Activated naive CD4-positive, alpha-beta T cell treated with anti-CD3 and anti-CD28 coated beads for 36 hours (primary cell): ENCODE measurements at regions of chr1 and their contacts with region 1.

Region 1: GRCh38 chr1:145978854-145979759 is 14.6 kb downstream of the POLR3GL start:
- DNase-seq: peak; percentile 93
- H3K4me3 Mint-ChIP-seq: no peak overlapping the region
- H3K27ac Mint-ChIP-seq: no peak overlapping the region
- H3K4me1 Mint-ChIP-seq: peaks cover 5% of the 10 kb centered on the region
- H3K27me3 Mint-ChIP-seq: no peaks in the 10 kb centered on the region

Region 2: GRCh38 chr1:145858894-145859490 is 120.1 kb before region 1 on chr1 and contains the start of gene PIAS3:
- CTCF ChIA-PET with region 1: interaction called, 12 read pairs
- intact Hi-C with region 1: no loop called
- DNase-seq: peak; percentile 84
- H3K4me3 Mint-ChIP-seq: peak within 1 kb of the TSS; percentile 87
- H3K27ac Mint-ChIP-seq: peak within 1 kb of the TSS; percentile 83
- H3K4me1 Mint-ChIP-seq: peaks cover 9% of the 10 kb centered on the region
- H3K27me3 Mint-ChIP-seq: no peaks in the 10 kb centered on the region
- total RNA-seq, gene PIAS3: 19.1 to 19.6 TPM

Region 3: GRCh38 chr1:145963995-145964901 is 14.9 kb before region 1 on chr1 and contains the starts of genes ANKRD34A and POLR3GL:
- CTCF ChIA-PET with region 1: interaction called, 44 read pairs
- intact Hi-C with region 1: loop called (anchors 1 kb)
- DNase-seq: peak; percentile 98
- H3K4me3 Mint-ChIP-seq: peak within 1 kb of the TSS; percentile 97
- H3K27ac Mint-ChIP-seq: peak within 1 kb of the TSS; percentile 84
- H3K4me1 Mint-ChIP-seq: peaks cover 35% of the 10 kb centered on the region
- H3K27me3 Mint-ChIP-seq: no peaks in the 10 kb centered on the region
- total RNA-seq, gene ANKRD34A: 3.7 to 4.3 TPM
- total RNA-seq, gene POLR3GL: 32.0 to 34.0 TPM

Region 4: GRCh38 chr1:146001709-146002108 is 22.6 kb after region 1 on chr1:
- CTCF ChIA-PET with region 1: interaction called, 230 read pairs
- intact Hi-C with region 1: loop called (anchors 1 kb)
- DNase-seq: no peak
- H3K4me3 Mint-ChIP-seq: no peak overlapping the region
- H3K27ac Mint-ChIP-seq: peak overlapping the region; percentile 63
- H3K4me1 Mint-ChIP-seq: peaks cover 72% of the 10 kb centered on the region
- H3K27me3 Mint-ChIP-seq: no peaks in the 10 kb centered on the region

Region 5: DNA sequence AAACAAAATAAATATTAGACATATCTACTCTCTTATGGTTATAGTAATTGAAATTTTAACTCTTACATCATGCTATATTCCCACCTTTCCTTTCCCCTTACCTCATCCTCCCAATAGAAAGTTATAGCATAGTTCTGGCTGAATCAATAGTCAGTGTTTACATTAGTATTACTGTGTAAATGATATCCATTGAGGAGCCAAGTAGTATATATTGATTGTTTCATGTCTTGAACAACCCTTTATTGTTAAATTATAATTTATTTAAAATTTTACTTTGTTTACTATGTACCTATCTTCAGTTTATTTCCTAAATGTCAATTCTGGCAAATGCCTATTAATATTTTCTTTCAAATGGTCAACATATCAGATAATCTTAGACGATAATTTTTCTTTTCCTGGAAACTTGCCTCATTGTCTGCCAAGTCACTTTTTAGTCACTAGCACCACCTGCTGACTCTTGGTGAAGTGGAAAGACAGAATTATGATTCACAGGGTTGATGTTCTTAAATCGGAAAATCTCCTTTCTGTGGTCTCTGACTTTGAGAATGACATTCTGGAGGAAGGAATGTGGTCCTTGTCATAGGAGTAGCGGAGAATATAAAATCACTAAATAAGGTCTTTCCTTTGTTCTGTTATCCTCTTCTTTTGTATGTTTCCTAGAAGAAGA is 33.8 kb after region 1 on chr1:
- CTCF ChIA-PET with region 1: interaction called, 230 read pairs
- intact Hi-C with region 1: loop called (anchors 1 kb)
- DNase-seq: peak; percentile 84
- H3K4me3 Mint-ChIP-seq: no peak overlapping the region
- H3K27ac Mint-ChIP-seq: no peak overlapping the region
- H3K4me1 Mint-ChIP-seq: peaks cover 5% of the 10 kb centered on the region
- H3K27me3 Mint-ChIP-seq: peaks cover 7% of the 10 kb centered on the region